Left colon (tissue), 2 donors: ENCODE measurements at regions of chr3 and their contacts with region 1.

Region 1: DNA sequence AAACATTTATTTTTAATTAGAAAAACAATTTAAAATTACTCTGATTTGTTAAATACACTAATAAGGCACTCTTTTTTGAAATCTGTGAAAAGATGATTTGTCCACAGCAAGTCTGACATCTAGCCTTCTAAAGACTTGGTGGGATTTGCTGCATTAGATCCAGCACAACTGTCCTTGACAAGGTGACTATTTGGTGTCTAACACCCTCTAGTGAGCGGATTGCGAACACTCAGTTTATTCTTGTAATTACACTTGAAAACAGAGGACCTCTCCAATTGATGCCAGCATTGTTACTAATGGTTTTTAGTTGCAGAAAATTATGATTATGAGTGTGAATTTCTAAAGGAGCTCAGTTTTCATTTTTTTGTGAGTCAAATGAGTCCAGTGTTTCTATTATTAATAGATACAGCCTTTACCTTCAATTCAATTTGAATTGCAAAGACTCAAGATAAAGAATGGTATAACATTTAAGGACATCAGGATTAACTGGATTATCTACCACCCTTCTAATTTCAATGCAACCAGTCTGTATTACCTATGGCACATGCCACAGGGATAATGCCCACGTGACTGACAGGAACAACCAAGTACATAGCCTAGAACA is 29.7 kb upstream of the STRIT1 start:
- DNase-seq: peak in 1 of 2 donors; percentile 11
- ATAC-seq: peak; percentile 72

Region 2: GRCh38 chr3:154758109-154758868 is 564.9 kb before region 1 on chr3:
- intact Hi-C with region 1: loop called in 1 of 2 experiments (anchors 2 kb)
- DNase-seq: no peak
- ATAC-seq: no peak